ENCODE measurements at regions of chr2 and their contacts with region 1.

Region 1: DNA sequence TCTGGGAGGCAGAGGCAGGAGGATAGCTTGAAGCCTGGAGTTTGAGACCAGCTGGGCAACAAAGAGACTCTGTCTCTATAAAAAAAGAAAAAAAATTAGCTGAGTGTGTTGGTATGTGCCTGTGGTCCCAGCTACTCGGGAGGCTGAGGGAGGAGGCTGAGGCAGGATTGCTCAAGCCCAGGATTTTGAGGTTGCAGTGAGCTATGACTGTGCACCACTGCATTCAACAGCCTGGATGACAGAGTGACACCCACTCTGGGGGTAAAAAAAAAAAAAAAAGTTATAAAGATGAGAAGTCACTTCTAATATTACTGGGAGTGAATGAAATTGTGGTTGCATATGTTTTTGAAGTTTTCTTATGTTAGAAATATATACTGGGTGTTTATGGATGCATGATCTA is 71.6 kb downstream of the C2orf74 start:
- DNase-seq: no peak
- H3K4me3 ChIP-seq: no peak overlapping the region
- H3K27ac ChIP-seq: no peak overlapping the region
- H3K4me1 ChIP-seq: no peaks in the 10 kb centered on the region
- H3K27me3 ChIP-seq: no peaks in the 10 kb centered on the region
- CTCF ChIP-seq: no peak
- POLR2A ChIP-seq: no peak

Region 2: GRCh38 chr2:61016808-61017555 is 216.6 kb before region 1 on chr2:
- intact Hi-C with region 1: no loop called
- DNase-seq: peak; percentile 86
- H3K4me3 ChIP-seq: peak overlapping the region; percentile 85 to 88
- H3K27ac ChIP-seq: peak overlapping the region; percentile 88 to 93
- H3K4me1 ChIP-seq: peaks cover 16% of the 10 kb centered on the region
- H3K27me3 ChIP-seq: no peaks in the 10 kb centered on the region
- CTCF ChIP-seq: peak in 1 of 3 experiments; percentile 4
- POLR2A ChIP-seq: no peak

Region 3: GRCh38 chr2:61520261-61520660 is 286.7 kb after region 1 on chr2:
- intact Hi-C with region 1: loop called (anchors 5 kb)
- DNase-seq: peak; percentile 70
- H3K4me3 ChIP-seq: no peak overlapping the region
- H3K27ac ChIP-seq: no peak overlapping the region
- H3K4me1 ChIP-seq: peaks cover 22% of the 10 kb centered on the region
- H3K27me3 ChIP-seq: no peaks in the 10 kb centered on the region
- CTCF ChIP-seq: no peak
- POLR2A ChIP-seq: no peak

Measured in testis (tissue), 5 donors.